H1 (cell line): ENCODE measurements at regions of chr4 and their contacts with region 1.

Region 1: GRCh38 chr4:113064244-113064643 is 14.8 kb downstream of the ANK2 start:
- DNase-seq: peak; percentile 70 to 86
- H3K4me3 ChIP-seq: peak overlapping the region in 1 of 4 experiments; percentile 43; a peak in 3 of 8 replicates
- H3K27ac ChIP-seq: no peak overlapping the region
- H3K4me1 ChIP-seq: peaks cover 1 to 19% (median 10%) of the 10 kb centered on the region in 4 experiments; a peak in 5 of 7 replicates
- H3K27me3 ChIP-seq: no peaks in the 10 kb centered on the region
- CTCF ChIP-seq: no peak
- EP300 ChIP-seq: peak; percentile 25 to 97; a peak in 2 of 3 replicates
- POLR2A ChIP-seq: peak in 1 of 2 experiments; percentile 70; a peak in 2 of 3 replicates
- RAD21 ChIP-seq: no peak; a peak in 1 of 4 replicates

Region 2: GRCh38 chr4:112916868-112917267 is 147.4 kb before region 1 on chr4:
- CTCF ChIA-PET with region 1: no interaction called
- POLR2A ChIA-PET with region 1: no interaction called
- DNase-seq: no peak
- H3K4me3 ChIP-seq: no peak overlapping the region
- H3K27ac ChIP-seq: no peak overlapping the region
- H3K4me1 ChIP-seq: peaks cover 0 to 3% (median 0%) of the 10 kb centered on the region in 4 experiments; a peak in 1 of 7 replicates
- H3K27me3 ChIP-seq: no peaks in the 10 kb centered on the region
- CTCF ChIP-seq: no peak
- EP300 ChIP-seq: no peak
- POLR2A ChIP-seq: no peak
- RAD21 ChIP-seq: no peak

Region 3: DNA sequence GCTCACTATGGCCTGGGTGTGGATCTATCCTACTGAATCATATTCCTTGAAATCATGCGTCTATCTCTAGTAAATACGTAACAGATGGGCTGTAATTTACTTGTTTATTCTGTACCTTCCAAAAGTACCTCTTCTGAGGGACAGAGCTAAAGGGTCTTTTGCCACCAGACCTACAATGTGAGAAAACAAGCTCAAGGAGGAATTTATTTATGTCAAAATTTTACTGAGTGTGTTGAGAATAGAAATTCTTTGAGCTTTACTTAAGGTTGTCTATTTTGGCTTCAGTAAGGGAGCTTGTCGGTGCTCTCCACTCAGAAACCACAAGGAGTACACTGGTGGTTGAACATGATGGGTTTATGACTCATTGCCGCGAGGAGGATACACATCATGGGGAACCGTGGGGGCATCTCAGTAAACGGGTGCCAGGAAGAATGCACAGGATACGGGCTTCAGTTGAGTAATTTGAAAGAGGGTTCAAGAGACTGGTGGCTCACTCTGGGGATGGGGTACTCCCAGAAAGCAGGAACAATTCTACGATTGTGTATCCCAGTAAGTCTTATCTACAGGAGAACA is 11.8 kb before region 1 on chr4:
- CTCF ChIA-PET with region 1: no interaction called
- POLR2A ChIA-PET with region 1: interaction called, 21 read pairs
- DNase-seq: no peak
- H3K4me3 ChIP-seq: no peak overlapping the region
- H3K27ac ChIP-seq: no peak overlapping the region
- H3K4me1 ChIP-seq: peaks cover 7 to 20% (median 15%) of the 10 kb centered on the region in 4 experiments; a peak in 6 of 7 replicates
- H3K27me3 ChIP-seq: no peaks in the 10 kb centered on the region
- CTCF ChIP-seq: no peak
- EP300 ChIP-seq: no peak
- POLR2A ChIP-seq: no peak
- RAD21 ChIP-seq: no peak

Region 4: DNA sequence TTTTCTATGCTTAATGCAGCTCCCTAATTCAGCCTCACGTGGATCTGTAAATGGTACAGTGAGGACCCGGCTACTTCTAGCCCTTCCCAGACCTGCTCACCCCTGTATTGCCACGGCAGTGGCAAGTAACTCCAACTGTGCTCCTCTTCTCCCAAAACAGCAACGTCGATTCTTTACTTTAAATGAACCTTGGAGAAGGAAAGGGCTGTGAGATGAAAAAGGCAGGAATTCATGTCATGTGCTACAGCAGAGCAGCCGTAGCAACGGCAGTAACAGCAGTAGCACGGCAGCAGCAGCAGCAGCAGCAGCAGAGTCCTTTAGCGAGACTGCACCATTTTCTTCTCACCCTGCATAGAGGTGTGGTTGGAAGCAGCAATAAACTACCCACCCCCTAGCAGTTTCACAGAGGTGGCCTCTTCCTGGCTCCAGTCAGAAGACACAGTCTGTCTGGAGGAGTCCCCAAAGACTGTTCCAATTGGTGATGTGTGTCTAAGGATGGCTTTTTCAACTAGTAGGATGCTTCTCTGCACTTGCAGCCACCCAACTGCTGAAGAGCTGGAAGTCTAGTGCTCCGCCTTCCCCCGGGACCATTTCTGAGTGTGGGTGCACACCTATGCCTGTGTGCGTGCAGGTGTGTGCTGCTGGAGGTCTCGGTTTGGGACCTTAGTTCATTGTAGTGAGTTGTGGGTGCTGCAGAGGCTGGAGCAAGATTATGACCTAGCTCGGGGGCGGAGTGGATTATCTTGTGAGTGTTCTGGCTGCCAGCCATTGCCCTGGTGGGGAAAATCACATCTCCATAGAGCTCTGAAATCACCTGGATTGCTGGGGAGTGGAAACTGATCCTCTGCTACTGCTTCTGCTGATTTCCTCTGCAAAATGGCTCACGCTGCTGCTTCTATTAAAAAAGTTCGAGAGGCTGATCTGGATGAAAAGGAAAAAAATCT is 52.4 kb after region 1 on chr4:
- CTCF ChIA-PET with region 1: no interaction called
- POLR2A ChIA-PET with region 1: no interaction called
- DNase-seq: no peak
- H3K4me3 ChIP-seq: no peak overlapping the region
- H3K27ac ChIP-seq: no peak overlapping the region
- H3K4me1 ChIP-seq: peaks cover 0 to 15% (median 6%) of the 10 kb centered on the region in 4 experiments
- H3K27me3 ChIP-seq: no peaks in the 10 kb centered on the region
- CTCF ChIP-seq: no peak
- EP300 ChIP-seq: no peak
- POLR2A ChIP-seq: no peak
- RAD21 ChIP-seq: no peak

Region 5: GRCh38 chr4:113179996-113180395 is 115.8 kb after region 1 on chr4:
- CTCF ChIA-PET with region 1: no interaction called
- POLR2A ChIA-PET with region 1: no interaction called
- DNase-seq: no peak
- H3K4me3 ChIP-seq: no peak overlapping the region
- H3K27ac ChIP-seq: no peak overlapping the region
- H3K4me1 ChIP-seq: no peaks in the 10 kb centered on the region
- H3K27me3 ChIP-seq: no peaks in the 10 kb centered on the region
- CTCF ChIP-seq: no peak
- EP300 ChIP-seq: no peak
- POLR2A ChIP-seq: no peak
- RAD21 ChIP-seq: no peak